Activated CD4-positive, alpha-beta memory T cell treated with anti-CD3 and anti-CD28 coated beads, Interleukin-2, amount 10 ng/mL, durations not matched to agents 7 days and 5 days (primary cell): ENCODE measurements at regions of chr13 and their contacts with region 1.

Region 1: GRCh38 chr13:51452361-51453206 is at the start of gene INTS6:
- DNase-seq: peak; percentile 99
- H3K4me3 Mint-ChIP-seq: peak within 1 kb of the TSS; percentile 91
- H3K27ac Mint-ChIP-seq: peak within 1 kb of the TSS; percentile 94
- H3K4me1 Mint-ChIP-seq: peaks cover 32% of the 10 kb centered on the region
- H3K27me3 Mint-ChIP-seq: no peaks in the 10 kb centered on the region
- total RNA-seq, gene INTS6: 45.5 to 48.9 TPM

Region 2: DNA sequence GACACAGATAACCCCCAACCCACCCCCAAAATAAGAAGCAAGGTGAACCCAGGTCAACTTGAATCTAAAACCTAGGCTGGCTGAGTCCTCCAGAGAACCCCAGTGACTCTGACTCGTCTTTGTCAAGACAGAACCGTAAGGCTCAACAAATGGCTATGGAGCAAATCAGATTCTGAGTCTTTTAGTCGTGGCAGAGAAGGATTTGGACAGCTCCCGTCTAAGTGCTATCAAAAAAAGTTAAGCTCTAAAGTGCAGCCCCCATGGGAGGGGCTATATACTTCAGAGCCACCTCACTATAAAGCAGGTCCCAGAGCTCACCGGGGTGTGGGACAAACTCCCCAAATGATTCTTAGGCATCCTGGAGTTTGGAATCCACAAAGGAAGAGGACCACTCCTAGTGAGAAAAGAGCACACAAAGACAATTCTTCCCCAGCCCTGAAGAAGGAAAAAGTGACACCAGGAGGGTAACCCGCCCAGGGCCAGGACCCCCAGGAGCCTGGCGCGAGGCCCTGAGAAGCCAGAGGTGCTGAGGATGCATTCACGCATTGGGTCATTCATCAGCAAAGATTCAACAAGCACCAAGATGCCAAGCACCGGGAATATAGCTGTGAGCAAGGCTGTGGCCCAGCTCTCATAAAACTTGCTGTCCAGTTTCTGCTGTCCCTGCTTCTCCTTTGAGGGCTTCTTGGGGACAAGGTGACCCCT is 316.2 kb before region 1 on chr13:
- CTCF ChIA-PET with region 1: no interaction called
- POLR2A ChIA-PET with region 1: no interaction called
- DNase-seq: no peak
- H3K4me3 Mint-ChIP-seq: no peak overlapping the region
- H3K27ac Mint-ChIP-seq: no peak overlapping the region
- H3K4me1 Mint-ChIP-seq: no peaks in the 10 kb centered on the region
- H3K27me3 Mint-ChIP-seq: peaks cover 12% of the 10 kb centered on the region

Region 3: DNA sequence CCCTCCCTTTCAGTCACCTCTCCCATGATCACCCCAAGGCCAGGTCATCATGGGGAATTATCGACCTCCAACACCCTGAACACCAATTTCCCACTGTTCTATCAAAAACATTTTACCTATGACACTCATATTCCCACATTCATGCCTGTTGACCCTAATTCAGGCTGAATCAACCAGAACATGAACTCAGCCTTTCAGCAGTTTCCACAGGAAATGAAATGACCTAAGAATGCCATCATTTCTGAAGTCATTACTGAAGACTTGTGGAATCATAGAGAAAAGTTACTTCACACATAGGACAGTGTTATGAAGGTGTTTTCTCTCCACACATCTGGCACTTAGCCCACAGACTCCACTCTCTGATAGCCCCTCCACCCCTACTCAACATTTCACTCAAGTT is 260.2 kb before region 1 on chr13:
- CTCF ChIA-PET with region 1: no interaction called
- POLR2A ChIA-PET with region 1: no interaction called
- DNase-seq: no peak
- H3K4me3 Mint-ChIP-seq: no peak overlapping the region
- H3K27ac Mint-ChIP-seq: no peak overlapping the region
- H3K4me1 Mint-ChIP-seq: peaks cover 6% of the 10 kb centered on the region
- H3K27me3 Mint-ChIP-seq: peaks cover 28% of the 10 kb centered on the region

Region 4: GRCh38 chr13:51269039-51269438 is 183.5 kb before region 1 on chr13:
- CTCF ChIA-PET with region 1: no interaction called
- POLR2A ChIA-PET with region 1: no interaction called
- DNase-seq: no peak
- H3K4me3 Mint-ChIP-seq: no peak overlapping the region
- H3K27ac Mint-ChIP-seq: no peak overlapping the region
- H3K4me1 Mint-ChIP-seq: no peaks in the 10 kb centered on the region
- H3K27me3 Mint-ChIP-seq: peaks cover 5% of the 10 kb centered on the region

Region 5: GRCh38 chr13:51475727-51476501 is 23.3 kb after region 1 on chr13:
- CTCF ChIA-PET with region 1: no interaction called
- POLR2A ChIA-PET with region 1: interaction called, 22 read pairs
- DNase-seq: no peak
- H3K4me3 Mint-ChIP-seq: no peak overlapping the region
- H3K27ac Mint-ChIP-seq: no peak overlapping the region
- H3K4me1 Mint-ChIP-seq: peaks cover 2% of the 10 kb centered on the region
- H3K27me3 Mint-ChIP-seq: peaks cover 4% of the 10 kb centered on the region

Region 6: GRCh38 chr13:51583875-51584730 is 131.5 kb after region 1 on chr13 and contains the start of gene WDFY2:
- CTCF ChIA-PET with region 1: interaction called, 16 read pairs
- POLR2A ChIA-PET with region 1: interaction called, 109 read pairs
- DNase-seq: peak; percentile 99
- H3K4me3 Mint-ChIP-seq: peak within 1 kb of the TSS; percentile 86
- H3K27ac Mint-ChIP-seq: peak within 1 kb of the TSS; percentile 93
- H3K4me1 Mint-ChIP-seq: peaks cover 44% of the 10 kb centered on the region
- H3K27me3 Mint-ChIP-seq: peaks cover 7% of the 10 kb centered on the region
- total RNA-seq, gene WDFY2: 12.2 to 14.1 TPM

Region 7: GRCh38 chr13:51645154-51645650 is 192.6 kb after region 1 on chr13:
- CTCF ChIA-PET with region 1: interaction called, 3 read pairs
- POLR2A ChIA-PET with region 1: interaction called, 24 read pairs
- DNase-seq: no peak
- H3K4me3 Mint-ChIP-seq: peak overlapping the region; percentile 22
- H3K27ac Mint-ChIP-seq: peak overlapping the region; percentile 66
- H3K4me1 Mint-ChIP-seq: peaks cover 38% of the 10 kb centered on the region
- H3K27me3 Mint-ChIP-seq: no peaks in the 10 kb centered on the region

Region 8: GRCh38 chr13:51797664-51798488 is 345.3 kb after region 1 on chr13:
- CTCF ChIA-PET with region 1: interaction called, 30 read pairs
- POLR2A ChIA-PET with region 1: interaction called, 82 read pairs
- DNase-seq: peak; percentile 68
- H3K4me3 Mint-ChIP-seq: no peak overlapping the region
- H3K27ac Mint-ChIP-seq: no peak overlapping the region
- H3K4me1 Mint-ChIP-seq: peaks cover 39% of the 10 kb centered on the region
- H3K27me3 Mint-ChIP-seq: no peaks in the 10 kb centered on the region